Activated CD4-positive, alpha-beta T cell treated with anti-CD3 and anti-CD28 coated beads, Interleukin-2, amount 10 ng/mL, durations not matched to agents 7 days and 5 days (primary cell): ENCODE measurements at regions of chr2 and their contacts with region 1.

Region 1: DNA sequence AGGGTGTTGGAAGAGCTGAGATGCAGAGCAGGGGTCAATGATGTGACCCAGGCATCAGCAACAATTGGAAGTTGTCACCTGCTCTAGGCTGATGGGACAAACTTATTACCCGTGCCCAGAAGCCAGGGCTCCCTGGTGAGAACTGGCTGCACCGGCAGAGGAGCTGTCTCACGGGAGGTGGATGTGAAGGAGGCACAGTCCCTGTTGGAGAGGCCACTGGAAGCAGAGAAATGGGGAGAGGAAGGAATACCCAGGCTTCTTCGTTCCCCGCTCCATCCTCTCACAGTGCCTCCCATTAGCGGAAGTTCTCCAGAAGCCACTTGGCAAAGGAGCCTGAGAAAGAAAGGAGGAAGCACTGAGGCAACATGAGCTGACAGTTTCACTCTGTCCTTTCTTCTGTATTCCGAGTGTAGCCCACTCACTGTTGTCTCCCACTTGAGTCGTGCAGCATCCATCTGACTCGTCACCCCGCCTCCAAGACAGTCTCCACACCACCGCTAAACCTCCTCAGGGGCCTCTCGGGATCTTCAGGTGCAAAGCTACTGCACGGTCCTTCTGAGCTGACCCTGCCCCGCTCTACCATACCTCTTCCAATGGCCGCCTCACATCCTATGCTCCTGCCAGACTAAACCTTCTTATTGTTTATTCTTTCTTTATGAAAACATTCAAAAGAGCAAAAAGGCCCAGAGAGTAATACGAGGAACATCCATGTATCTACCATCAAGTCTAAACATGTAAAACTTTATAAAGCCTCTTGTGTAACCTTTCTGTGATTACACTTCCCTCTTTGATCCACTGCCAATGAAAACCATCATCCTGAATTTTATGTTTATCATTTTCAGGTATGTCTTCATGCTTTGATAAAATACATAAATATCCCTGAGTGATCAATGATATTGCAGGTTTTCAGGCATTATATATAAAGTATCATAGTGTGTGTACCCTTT is 19.1 kb upstream of the AFTPH start:
- DNase-seq: no peak
- H3K4me3 Mint-ChIP-seq: no peak overlapping the region
- H3K27ac Mint-ChIP-seq: no peak overlapping the region
- H3K4me1 Mint-ChIP-seq: peaks cover 7% of the 10 kb centered on the region
- H3K27me3 Mint-ChIP-seq: peaks cover 3% of the 10 kb centered on the region

Region 2: DNA sequence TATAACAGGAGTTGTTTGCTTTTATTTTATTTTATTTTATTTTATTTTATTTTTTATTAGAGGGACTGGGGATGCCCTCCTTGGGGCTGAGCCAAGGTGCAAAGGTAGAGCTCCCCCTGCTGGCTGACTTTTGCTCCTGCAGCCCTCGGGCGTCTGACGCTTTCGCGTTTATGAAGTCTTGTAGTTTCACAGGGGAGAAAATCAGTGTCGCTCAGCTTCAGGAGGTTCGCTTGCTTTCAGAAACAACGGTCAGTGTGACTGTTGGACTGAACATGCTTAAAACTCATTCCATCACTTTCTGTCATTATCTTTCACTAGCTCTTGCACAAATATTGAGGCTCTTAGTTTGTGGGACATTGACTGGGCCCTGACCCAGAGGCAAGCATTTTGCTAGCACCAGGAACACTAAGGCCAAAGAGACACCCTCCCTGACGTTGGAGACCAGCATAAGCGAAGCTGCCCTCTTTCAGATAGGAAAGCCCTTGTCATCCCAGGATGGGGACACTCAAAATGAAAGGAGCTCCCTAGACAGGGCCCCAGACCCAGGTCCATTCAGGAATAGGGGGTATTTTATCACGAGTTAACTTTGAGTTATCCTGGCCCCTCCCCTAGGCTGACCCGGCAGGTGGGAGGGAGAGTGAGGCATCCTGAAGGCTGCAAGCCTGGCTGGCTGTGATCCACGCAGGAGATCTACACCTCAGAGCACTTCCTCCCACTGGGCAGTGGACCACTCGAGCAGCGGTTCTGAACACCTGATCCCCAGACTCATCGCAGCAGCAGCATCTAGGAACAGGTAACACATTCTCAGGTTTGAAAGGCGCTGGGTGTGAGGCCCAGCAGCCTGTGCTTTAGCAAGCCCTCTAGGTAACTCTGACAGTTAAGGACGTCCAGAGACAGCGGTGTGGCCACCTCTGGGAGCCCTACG is 16.7 kb before region 1 on chr2:
- CTCF ChIA-PET with region 1: interaction called, 26 read pairs
- POLR2A ChIA-PET with region 1: no interaction called
- DNase-seq: peak; percentile 83
- H3K4me3 Mint-ChIP-seq: no peak overlapping the region
- H3K27ac Mint-ChIP-seq: no peak overlapping the region
- H3K4me1 Mint-ChIP-seq: peaks cover 25% of the 10 kb centered on the region
- H3K27me3 Mint-ChIP-seq: peaks cover 30% of the 10 kb centered on the region

Region 3: GRCh38 chr2:64523666-64524603 is 18.9 kb after region 1 on chr2 and contains the start of gene AFTPH:
- CTCF ChIA-PET with region 1: interaction called, 15 read pairs
- POLR2A ChIA-PET with region 1: no interaction called
- DNase-seq: peak; percentile 100
- H3K4me3 Mint-ChIP-seq: peak within 1 kb of the TSS; percentile 99
- H3K27ac Mint-ChIP-seq: peak within 1 kb of the TSS; percentile 99
- H3K4me1 Mint-ChIP-seq: peaks cover 41% of the 10 kb centered on the region
- H3K27me3 Mint-ChIP-seq: peaks cover 5% of the 10 kb centered on the region
- total RNA-seq, gene AFTPH: 31.1 to 38.9 TPM